H1 (cell line): ENCODE measurements at regions of chr6 and their contacts with region 1.

Region 1: DNA sequence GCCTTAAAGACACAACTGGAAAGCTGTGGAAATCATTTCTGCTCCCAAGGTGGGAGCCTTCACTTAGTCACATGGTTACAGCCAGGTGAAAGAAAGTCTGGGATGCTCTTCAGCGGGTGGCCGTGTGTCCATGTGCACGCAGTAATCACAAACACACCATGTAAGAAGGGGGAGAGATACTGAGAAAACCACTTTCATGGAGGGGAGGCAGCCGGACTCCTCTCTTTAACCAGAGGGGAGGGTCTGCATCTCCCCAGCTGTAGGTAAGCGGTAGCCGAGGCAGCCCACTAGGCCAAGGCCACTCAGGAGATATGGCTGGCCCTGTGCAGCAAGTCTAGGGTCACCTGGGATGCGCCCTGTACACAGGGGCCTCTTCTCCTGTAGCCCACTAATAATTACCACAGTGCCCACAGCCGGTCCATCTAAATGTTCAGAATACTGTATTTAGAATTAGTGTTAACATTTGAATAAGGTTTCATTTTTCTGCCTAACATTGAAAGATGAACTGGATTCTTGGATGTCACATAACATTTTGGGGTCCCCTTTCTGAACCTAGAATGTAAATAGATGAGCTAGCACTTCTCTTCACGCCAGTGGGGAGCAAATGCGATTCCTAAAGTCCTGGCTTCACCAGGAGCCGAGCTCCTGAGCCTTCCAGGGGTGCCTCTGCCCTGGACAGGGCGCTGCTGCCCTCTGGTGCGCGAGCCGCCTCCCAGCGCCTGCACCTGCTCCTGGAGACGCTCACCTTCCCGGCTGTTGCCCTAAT is 15.9 kb downstream of the GPR31 start:
- DNase-seq: peak in 1 of 2 experiments; percentile 79
- H3K4me3 ChIP-seq: no peak overlapping the region
- H3K27ac ChIP-seq: no peak overlapping the region
- H3K4me1 ChIP-seq: peaks cover 3 to 16% (median 12%) of the 10 kb centered on the region in 4 experiments
- H3K27me3 ChIP-seq: no peaks in the 10 kb centered on the region; a peak in 2 of 7 replicates
- CTCF ChIP-seq: peak; percentile 90 to 94 (median 92)
- EP300 ChIP-seq: peak in 1 of 2 experiments; percentile 29; a peak in 1 of 3 replicates
- POLR2A ChIP-seq: no peak
- RAD21 ChIP-seq: peak; percentile 98 to 99

Region 2: GRCh38 chr6:167047554-167047953 is 94.3 kb before region 1 on chr6:
- CTCF ChIA-PET with region 1: interaction called, 72 read pairs
- POLR2A ChIA-PET with region 1: interaction called, 3 read pairs
- DNase-seq: no peak
- H3K4me3 ChIP-seq: no peak overlapping the region
- H3K27ac ChIP-seq: no peak overlapping the region
- H3K4me1 ChIP-seq: no peaks in the 10 kb centered on the region
- H3K27me3 ChIP-seq: no peaks in the 10 kb centered on the region
- CTCF ChIP-seq: no peak
- EP300 ChIP-seq: no peak
- POLR2A ChIP-seq: no peak
- RAD21 ChIP-seq: no peak

Region 3: GRCh38 chr6:167130008-167130677 is 11.7 kb before region 1 on chr6:
- CTCF ChIA-PET with region 1: interaction called, 16 read pairs
- POLR2A ChIA-PET with region 1: no interaction called
- DNase-seq: no peak
- H3K4me3 ChIP-seq: no peak overlapping the region
- H3K27ac ChIP-seq: no peak overlapping the region
- H3K4me1 ChIP-seq: no peaks in the 10 kb centered on the region
- H3K27me3 ChIP-seq: no peaks in the 10 kb centered on the region
- CTCF ChIP-seq: no peak
- EP300 ChIP-seq: no peak
- POLR2A ChIP-seq: no peak
- RAD21 ChIP-seq: no peak

Region 4: DNA sequence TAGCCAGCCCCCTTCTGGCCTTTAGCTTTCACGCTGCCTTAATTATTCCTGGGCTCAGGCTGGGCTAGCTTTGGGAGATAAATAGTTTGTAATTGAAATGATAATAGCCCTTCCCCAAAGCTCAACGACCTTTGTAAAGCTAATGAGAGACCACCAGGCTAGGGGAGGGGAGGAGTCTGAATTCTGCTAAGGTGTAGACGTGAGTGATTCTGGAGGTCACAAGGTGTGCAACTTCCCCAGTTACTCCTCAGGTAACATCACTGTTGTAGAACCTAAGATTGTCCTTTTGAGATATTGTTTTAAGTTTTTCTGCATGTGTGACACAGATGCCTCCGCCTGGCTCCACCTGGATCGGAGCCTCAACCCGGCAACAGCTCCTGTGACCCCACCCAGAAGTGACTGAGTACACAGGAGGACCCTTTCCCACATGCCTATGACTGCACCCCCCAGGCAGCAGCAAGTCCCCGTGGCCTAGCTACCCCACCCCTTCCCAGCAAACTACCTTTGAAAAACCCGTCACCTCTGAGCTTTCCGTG is 21.7 kb after region 1 on chr6:
- CTCF ChIA-PET with region 1: interaction called, 13 read pairs
- POLR2A ChIA-PET with region 1: interaction called, 14 read pairs
- DNase-seq: peak; percentile 78 to 88
- H3K4me3 ChIP-seq: peak overlapping the region in 3 of 4 experiments; percentile 15 to 41 (median 30); a peak in 4 of 8 replicates
- H3K27ac ChIP-seq: peak overlapping the region; percentile 88
- H3K4me1 ChIP-seq: peaks cover 8 to 27% (median 22%) of the 10 kb centered on the region in 4 experiments
- H3K27me3 ChIP-seq: no peaks in the 10 kb centered on the region; a peak in 1 of 7 replicates
- CTCF ChIP-seq: peak in 1 of 3 experiments; percentile 6; a peak in 1 of 4 replicates
- EP300 ChIP-seq: no peak
- POLR2A ChIP-seq: peak in 1 of 2 experiments; percentile 52; a peak in 2 of 3 replicates
- RAD21 ChIP-seq: no peak; a peak in 1 of 4 replicates

Region 5: GRCh38 chr6:167200806-167201205 is 59.0 kb after region 1 on chr6:
- CTCF ChIA-PET with region 1: no interaction called
- POLR2A ChIA-PET with region 1: no interaction called
- DNase-seq: no peak
- H3K4me3 ChIP-seq: no peak overlapping the region
- H3K27ac ChIP-seq: no peak overlapping the region
- H3K4me1 ChIP-seq: no peaks in the 10 kb centered on the region
- H3K27me3 ChIP-seq: no peaks in the 10 kb centered on the region
- CTCF ChIP-seq: no peak
- EP300 ChIP-seq: no peak
- POLR2A ChIP-seq: no peak
- RAD21 ChIP-seq: no peak